Left cardiac atrium (tissue), 4 donors: ENCODE measurements at regions of chr4 and their contacts with region 1.

Region 1: DNA sequence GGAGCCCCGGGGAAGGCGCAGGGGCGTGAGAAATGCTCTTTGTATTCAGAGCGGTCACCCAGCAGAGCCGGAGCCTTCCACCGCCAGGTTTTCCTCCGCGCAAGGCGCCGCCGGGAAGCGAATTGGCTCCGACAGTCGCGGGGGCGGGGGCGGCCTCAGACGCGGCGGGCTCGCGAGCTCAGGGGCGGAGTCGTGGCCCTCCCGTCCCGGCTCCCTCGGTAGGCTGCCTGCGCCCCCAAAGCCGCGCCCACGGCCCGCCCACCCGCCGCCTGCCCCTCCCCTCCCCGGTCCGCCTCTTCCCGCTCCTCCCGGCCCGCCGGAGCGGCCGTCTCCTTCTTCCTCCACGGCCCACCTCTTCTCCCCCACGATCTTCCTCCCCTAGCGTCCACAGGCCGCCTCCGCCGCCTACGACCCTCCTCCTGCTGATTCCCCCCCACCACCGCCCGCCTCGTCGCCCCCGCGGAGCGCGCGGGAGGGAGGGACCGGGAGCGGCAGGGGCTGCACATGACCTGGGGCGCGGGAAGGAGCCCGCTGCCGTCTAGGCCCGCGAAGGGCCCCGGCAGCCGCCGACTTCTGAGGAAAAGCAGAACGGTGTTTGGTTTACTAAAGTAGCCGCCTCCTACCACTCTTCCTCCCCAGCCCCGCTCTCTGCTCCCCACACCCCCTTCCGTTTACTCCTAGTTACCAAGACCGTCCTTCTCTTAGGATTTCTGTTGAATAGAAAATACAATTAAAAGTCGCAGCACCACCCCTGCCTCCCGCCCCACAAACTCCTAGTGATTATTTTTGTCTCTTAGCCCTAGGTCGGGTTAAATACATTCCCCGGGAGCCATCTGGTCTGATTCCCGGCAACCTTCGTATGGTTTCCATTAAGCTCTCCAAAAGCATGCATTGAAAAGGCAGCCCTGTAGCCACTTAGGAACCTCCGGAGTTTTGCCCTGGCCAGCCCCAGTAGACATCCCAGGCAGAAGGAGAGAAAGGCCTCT is 53.2 kb downstream of the C4orf51 start:
- DNase-seq: peak; percentile 97
- ATAC-seq: peak; percentile 94 to 95

Region 2: GRCh38 chr4:145819853-145820181 is 86.6 kb after region 1 on chr4:
- intact Hi-C with region 1: loop called in 1 of 2 experiments (anchors 10 kb)
- DNase-seq: no peak
- ATAC-seq: peak; percentile 47 to 63

Region 3: GRCh38 chr4:145934434-145935047 is 201.4 kb after region 1 on chr4:
- intact Hi-C with region 1: loop called in 1 of 2 experiments (anchors 5 kb)
- DNase-seq: no peak
- ATAC-seq: no peak